GM10248 (cell line): ENCODE measurements at regions of chr5 and their contacts with region 1.

Region 1: DNA sequence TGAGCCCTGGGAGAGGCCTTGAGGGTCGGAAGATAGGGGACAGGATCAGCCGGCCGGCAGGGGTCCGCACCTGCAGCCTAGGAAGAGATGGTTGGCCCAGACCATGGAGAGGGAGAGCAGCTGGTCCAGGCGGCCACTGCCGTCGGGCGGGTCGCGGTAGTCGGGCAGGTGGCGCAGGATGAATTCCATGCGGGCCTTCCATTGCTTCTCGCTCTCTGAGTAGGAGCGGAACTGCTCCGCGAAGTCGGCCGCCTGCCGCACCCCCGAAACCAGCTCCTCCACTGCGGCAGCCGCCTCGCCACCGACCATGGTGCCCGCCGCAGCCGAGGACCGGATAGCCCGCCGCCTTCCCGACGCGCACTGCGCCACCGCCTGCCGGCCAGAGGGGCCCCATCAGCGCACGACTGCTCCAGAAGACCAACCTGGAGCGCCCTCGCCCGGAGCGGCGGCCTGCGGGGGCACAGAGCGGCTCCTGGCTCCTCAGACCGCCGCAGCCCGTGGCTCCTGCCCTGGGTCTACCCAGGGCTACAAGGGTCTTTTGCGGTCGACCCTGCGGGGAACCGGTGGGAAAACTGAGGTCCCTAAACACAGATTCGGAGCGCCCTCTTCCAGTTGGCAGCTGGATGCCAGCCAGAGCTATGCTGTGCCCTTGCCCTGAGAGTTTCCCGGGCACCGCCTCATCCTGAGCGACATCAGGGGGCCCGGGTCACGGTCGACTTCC is at the start of gene CDKN2AIPNL:
- DNase-seq: peak; percentile 96
- CTCF ChIP-seq: peak; percentile 95

Region 2: DNA sequence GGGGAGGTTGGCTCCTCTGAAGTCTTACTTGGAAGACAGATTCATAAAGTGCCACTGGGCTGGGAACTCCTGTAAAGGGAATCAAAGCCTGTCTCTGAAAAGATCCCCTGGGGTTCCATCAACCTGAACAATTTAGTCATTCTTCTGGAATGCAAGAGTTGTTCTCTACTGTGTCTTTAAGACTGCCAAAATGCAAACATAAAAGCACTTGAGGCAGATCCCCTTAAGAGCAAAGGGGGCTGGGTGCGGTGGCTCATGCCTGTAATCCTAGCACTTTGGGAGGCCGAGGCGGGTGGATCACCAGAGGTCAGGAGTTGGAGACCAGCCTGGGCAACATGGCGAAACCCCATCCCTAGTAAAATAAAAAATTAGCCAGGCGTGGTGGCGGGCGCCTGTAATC is 16.8 kb before region 1 on chr5:
- CTCF ChIA-PET with region 1: interaction called, 16 read pairs
- POLR2A ChIA-PET with region 1: interaction called, 5 read pairs
- DNase-seq: no peak
- CTCF ChIP-seq: no peak

Region 3: DNA sequence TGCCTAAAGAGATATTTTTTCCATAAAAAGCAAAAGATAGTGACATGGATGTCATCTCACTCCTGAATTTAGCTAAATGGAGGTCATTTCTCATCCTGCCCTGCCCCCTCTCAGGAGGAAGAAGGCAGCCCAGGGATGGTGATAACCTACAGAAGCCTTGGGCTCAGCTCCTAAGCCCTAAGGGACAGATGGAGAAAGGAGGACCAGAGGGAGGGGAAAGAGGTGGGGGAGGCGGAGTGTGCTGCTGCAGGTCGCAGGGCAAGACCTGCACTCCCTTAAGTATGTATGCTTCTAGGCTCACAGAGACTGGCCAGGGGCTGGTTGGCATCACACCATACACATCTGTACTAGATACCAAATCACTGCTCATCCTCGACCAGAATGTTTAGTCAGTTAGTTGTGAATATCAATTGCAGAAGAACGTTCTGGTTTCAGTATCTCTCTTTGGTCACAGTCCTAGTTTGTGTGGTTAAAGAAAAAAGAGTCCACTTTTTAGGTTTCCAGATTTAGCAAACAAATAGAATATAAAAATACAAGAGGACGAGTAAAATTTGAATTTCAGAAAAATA is 18.4 kb after region 1 on chr5:
- CTCF ChIA-PET with region 1: interaction called, 25 read pairs
- POLR2A ChIA-PET with region 1: no interaction called
- DNase-seq: no peak
- CTCF ChIP-seq: no peak

Region 4: GRCh38 chr5:134436523-134437339 is 25.0 kb after region 1 on chr5:
- CTCF ChIA-PET with region 1: interaction called, 13 read pairs
- POLR2A ChIA-PET with region 1: no interaction called
- DNase-seq: peak; percentile 74
- CTCF ChIP-seq: no peak

Region 5: GRCh38 chr5:134503088-134503946 is 91.6 kb after region 1 on chr5:
- CTCF ChIA-PET with region 1: interaction called, 11 read pairs
- POLR2A ChIA-PET with region 1: no interaction called
- DNase-seq: peak; percentile 70
- CTCF ChIP-seq: no peak